ENCODE measurements at regions of chr7 and their contacts with region 1.

Region 1: GRCh38 chr7:140159487-140159886 is 17.3 kb downstream of the KDM7A start:
- H3K4me3 Mint-ChIP-seq: no peak overlapping the region
- H3K27ac Mint-ChIP-seq: no peak overlapping the region
- H3K4me1 Mint-ChIP-seq: peaks cover 61% of the 10 kb centered on the region
- H3K27me3 Mint-ChIP-seq: no peaks in the 10 kb centered on the region

Region 2: DNA sequence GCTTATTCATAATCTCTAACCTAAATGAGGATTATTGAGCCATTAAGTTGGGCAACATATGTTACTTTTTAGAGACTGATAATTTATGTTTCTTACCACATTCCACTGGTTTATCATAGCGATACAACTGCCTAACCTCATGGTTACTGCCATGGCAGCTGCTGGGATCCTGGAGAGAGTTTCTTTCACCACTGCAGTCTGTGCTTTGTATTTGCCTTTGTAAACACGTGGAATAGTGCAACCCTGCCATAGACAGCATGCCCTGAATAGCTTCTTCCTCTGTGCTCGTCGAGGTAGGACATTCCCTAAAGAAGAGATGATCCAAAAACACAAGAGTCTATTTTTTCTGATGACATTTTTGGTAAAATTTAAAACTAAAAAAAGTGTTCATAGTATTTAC is 63.0 kb before region 1 on chr7:
- intact Hi-C with region 1: loop called (anchors 10 kb)
- H3K4me3 Mint-ChIP-seq: no peak overlapping the region
- H3K27ac Mint-ChIP-seq: no peak overlapping the region
- H3K4me1 Mint-ChIP-seq: peaks cover 1% of the 10 kb centered on the region
- H3K27me3 Mint-ChIP-seq: no peaks in the 10 kb centered on the region

Region 3: GRCh38 chr7:140121326-140121725 is 38.2 kb before region 1 on chr7:
- intact Hi-C with region 1: no loop called
- H3K4me3 Mint-ChIP-seq: no peak overlapping the region
- H3K27ac Mint-ChIP-seq: no peak overlapping the region
- H3K4me1 Mint-ChIP-seq: no peaks in the 10 kb centered on the region
- H3K27me3 Mint-ChIP-seq: no peaks in the 10 kb centered on the region

Region 4: DNA sequence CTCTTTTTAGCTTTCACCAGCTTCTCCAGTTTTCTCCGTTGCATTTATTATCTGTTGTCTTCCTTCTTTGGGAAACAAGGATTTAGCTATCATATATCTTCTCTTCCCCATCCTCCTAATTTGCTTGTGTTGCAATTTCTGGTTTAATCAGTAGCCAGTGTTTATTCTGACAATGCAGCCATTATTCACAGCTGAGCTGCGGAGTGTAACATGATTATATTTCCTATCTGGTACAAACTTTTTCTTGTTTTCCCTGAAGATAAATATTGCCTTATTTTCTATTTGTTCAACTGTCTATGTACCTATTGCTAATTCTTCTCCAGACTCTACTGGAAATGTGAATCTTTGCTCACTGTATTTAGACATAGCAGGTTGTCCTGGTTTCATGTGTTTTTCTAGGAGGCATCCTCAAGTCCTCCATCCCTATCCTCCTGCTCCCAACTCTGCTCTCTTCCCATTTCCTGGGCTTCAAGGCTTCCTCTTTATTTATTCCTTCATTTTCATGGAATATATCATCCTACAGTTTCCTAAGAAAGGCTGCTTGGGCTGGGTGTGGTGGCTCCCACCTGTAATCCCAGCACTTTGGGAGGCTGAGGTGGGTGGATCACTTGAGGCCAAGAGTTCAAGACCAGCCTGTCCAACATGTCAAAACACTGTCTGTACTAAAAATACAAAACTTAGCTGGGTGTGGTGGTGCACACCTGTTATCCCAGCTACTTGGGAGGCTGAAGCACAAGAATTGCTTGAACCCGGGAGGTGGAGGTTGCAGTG is 89.7 kb after region 1 on chr7:
- intact Hi-C with region 1: no loop called
- H3K4me3 Mint-ChIP-seq: no peak overlapping the region
- H3K27ac Mint-ChIP-seq: peak overlapping the region; percentile 95
- H3K4me1 Mint-ChIP-seq: peaks cover 64% of the 10 kb centered on the region
- H3K27me3 Mint-ChIP-seq: no peaks in the 10 kb centered on the region

Measured in dendritic cell treated with granulocyte-macrophage colony-stimulating factor and Interleukin-4, amounts not matched to agents 40 ng/mL and 50 ng/mL, for 4 days (primary cell).